Uterus (tissue), 4 donors: ENCODE measurements at regions of chr17 and their contacts with region 1.

Region 1: DNA sequence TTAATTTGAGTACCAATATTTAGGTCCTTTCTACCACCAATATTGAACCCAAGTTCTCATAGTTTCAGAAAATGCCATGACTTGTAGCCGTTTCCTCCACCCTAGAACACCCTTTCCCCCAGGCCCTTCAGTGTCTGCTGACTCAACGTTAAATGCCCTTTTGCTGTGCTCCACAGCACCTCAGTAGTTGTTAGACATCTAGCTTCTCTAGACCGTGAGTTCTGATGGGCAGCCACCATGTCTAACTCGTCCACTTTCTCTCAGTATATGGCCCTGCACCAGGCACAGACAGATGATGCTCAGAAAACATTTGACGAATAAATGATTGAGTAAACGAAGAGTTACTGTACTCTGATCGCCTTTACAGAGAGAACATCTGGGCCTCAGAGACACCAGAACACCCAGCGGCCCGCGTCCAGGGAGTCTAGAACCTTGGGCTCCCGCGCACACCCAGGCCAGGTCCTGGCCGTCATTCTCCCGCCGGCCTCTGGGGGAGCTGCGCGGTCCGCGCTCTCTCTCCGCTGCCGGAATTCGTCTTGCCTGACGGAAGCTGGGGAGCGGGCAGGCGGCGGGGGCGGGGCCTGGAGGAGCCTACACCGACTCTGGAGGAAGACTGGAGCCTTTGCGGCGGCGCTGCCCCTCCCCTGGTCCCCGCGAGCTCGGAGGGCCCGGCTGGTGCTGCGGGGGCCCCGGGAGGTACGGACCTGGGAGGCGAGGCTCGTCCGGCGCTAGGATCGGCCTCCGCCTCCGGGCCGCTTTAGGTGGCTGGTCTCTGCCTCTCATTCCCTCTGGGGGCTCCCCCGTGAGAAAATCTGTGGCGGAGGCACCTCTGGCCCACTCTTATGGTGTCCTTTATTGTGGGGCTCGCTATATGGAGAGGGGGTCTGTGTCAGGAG is at the start of gene NKIRAS2:
- DNase-seq: peak; percentile 90 to 92
- H3K4me3 ChIP-seq: peak within 1 kb of the TSS; percentile 73 to 85
- H3K27ac ChIP-seq: peak within 1 kb of the TSS; percentile 67 to 85
- H3K4me1 ChIP-seq: peaks cover 9 to 14% of the 10 kb centered on the region in 2 donors
- H3K27me3 ChIP-seq: no peaks in the 10 kb centered on the region
- CTCF ChIP-seq: peak; percentile 93 to 98 (median 96)
- POLR2A ChIP-seq: peak in 1 of 2 donors; percentile 51
- total RNA-seq, gene NKIRAS2: 2.4 to 35.4 (median 26.8) TPM

Region 2: GRCh38 chr17:41919840-41920599 is 99.7 kb before region 1 on chr17:
- intact Hi-C with region 1: loop called (anchors 5 kb)
- DNase-seq: peak; percentile 46 to 54
- H3K4me3 ChIP-seq: no peak overlapping the region
- H3K27ac ChIP-seq: peak overlapping the region in 1 of 2 donors; percentile 79
- H3K4me1 ChIP-seq: peaks cover 0 to 11% of the 10 kb centered on the region in 2 donors
- H3K27me3 ChIP-seq: no peaks in the 10 kb centered on the region
- CTCF ChIP-seq: no peak
- POLR2A ChIP-seq: no peak

Region 3: DNA sequence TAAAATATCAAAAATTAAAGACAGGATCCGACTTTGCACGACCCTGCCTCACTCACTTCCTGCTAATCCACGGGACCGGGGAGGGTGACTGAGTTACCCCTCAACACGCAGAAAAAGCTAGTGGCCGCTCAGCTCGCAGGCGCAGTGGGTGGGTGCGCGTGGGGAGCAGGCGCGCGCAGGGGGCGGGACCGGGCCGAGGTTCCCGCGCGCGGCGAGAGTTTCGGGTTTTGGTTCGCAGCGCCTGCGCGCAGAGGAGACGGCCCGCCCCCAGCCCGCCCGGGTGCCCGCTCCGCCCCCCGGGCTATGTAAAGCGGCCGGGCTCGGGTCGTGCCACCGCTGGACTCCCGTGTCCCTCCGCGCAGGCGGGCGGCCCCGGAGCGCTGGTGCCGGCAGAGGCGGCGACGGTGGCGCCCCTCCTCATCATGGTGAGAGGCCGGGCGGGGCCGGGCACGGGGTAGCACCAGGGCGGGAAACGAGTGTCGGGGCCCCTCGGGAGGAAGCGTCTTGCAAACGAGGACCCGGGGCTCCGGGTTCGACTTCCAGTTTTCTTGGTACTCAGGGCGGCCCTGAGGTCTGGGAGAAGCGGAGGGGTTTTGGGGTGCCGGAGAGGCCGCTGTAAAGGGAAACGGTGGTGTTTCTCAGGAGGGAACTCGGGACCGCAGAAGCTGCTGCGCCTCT is 53.2 kb before region 1 on chr17 and contains the start of gene CNP:
- intact Hi-C with region 1: loop called (anchors 10 kb)
- DNase-seq: peak; percentile 87 to 92
- H3K4me3 ChIP-seq: peak within 1 kb of the TSS; percentile 79 to 92
- H3K27ac ChIP-seq: peak within 1 kb of the TSS; percentile 85 to 91
- H3K4me1 ChIP-seq: peaks cover 0 to 9% of the 10 kb centered on the region in 2 donors
- H3K27me3 ChIP-seq: no peaks in the 10 kb centered on the region
- CTCF ChIP-seq: peak in 1 of 4 experiments; percentile 34
- POLR2A ChIP-seq: peak; percentile 73 to 86
- total RNA-seq, gene CNP: 10.2 to 74.7 (median 40.2) TPM